Dendritic cell treated with granulocyte-macrophage colony-stimulating factor and Interleukin-4, amounts not matched to agents 40 ng/mL and 50 ng/mL, for 4 days (primary cell): ENCODE measurements at regions of chr11 and their contacts with region 1.

Region 1: GRCh38 chr11:79400717-79401686 is 39.8 kb downstream of the TENM4 start:
- H3K4me3 Mint-ChIP-seq: no peak overlapping the region
- H3K27ac Mint-ChIP-seq: no peak overlapping the region
- H3K4me1 Mint-ChIP-seq: peaks cover 21% of the 10 kb centered on the region
- H3K27me3 Mint-ChIP-seq: peaks cover 30% of the 10 kb centered on the region

Region 2: DNA sequence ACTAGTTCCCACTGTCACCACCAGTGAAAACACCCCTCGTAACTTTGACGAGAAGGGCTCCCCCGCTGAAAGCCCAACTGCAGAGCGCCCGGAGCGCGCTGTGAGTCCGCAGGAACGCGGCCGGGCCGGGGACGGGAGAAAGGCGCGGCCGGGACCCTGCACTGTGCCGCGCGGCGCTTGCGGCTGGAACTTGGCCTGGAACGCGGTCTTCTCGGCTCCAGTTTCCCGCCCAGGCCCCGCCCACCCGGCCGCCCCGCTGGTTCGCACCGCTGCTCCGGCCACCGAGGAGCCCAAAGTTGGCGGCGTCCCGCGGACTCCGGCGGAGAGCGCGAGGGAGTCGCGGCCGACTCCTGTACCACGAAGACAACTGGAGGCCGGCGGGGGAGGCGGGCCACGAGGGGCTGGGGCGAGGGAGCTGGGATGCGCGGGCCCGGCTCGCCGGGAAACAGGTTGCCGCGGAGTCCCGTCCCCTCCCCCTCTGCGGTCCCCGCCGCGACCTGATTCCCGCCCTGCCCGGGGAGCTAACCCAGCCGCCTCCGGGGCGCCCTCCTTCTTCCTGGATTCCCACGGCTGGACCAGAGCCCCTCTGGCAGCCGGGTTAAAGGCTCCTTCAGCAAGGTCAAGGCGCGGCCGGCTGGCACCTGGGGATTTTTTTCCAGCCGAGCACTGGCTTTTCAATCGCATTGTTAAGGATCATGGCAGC is 36.4 kb after region 1 on chr11:
- intact Hi-C with region 1: loop called (anchors 5 kb)
- H3K4me3 Mint-ChIP-seq: peak overlapping the region; percentile 49
- H3K27ac Mint-ChIP-seq: no peak overlapping the region
- H3K4me1 Mint-ChIP-seq: peaks cover 39% of the 10 kb centered on the region
- H3K27me3 Mint-ChIP-seq: peaks cover 90% of the 10 kb centered on the region

Region 3: GRCh38 chr11:79493555-79494171 is 92.7 kb after region 1 on chr11:
- intact Hi-C with region 1: loop called (anchors 1 kb)
- H3K4me3 Mint-ChIP-seq: no peak overlapping the region
- H3K27ac Mint-ChIP-seq: no peak overlapping the region
- H3K4me1 Mint-ChIP-seq: peaks cover 5% of the 10 kb centered on the region
- H3K27me3 Mint-ChIP-seq: peaks cover 40% of the 10 kb centered on the region

Region 4: GRCh38 chr11:79538775-79539174 is 137.8 kb after region 1 on chr11:
- intact Hi-C with region 1: no loop called
- H3K4me3 Mint-ChIP-seq: no peak overlapping the region
- H3K27ac Mint-ChIP-seq: no peak overlapping the region
- H3K4me1 Mint-ChIP-seq: no peaks in the 10 kb centered on the region
- H3K27me3 Mint-ChIP-seq: peaks cover 1% of the 10 kb centered on the region